K562 (cell line): ENCODE measurements at regions of chr10 and their contacts with region 1.

Region 1: GRCh38 chr10:4849555-4850242 is 23.7 kb downstream of the AKR1E2 start:
- DNase-seq: peak; percentile 80 to 96 (median 82)
- ATAC-seq: peak; percentile 87
- H3K4me3 ChIP-seq: no peak overlapping the region
- H3K27ac ChIP-seq: peak overlapping the region; percentile 96
- H3K4me1 ChIP-seq: peaks cover 14 to 34% of the 10 kb centered on the region in 2 experiments
- H3K27me3 ChIP-seq: no peaks in the 10 kb centered on the region
- CTCF ChIP-seq: peak; percentile 100
- EP300 ChIP-seq: peak; percentile 73; the same call in 1 of the 2 replicates
- POLR2A ChIP-seq: no peak; the same call in none of the 2 replicates
- RAD21 ChIP-seq: peak; percentile 99 to 100

Region 2: DNA sequence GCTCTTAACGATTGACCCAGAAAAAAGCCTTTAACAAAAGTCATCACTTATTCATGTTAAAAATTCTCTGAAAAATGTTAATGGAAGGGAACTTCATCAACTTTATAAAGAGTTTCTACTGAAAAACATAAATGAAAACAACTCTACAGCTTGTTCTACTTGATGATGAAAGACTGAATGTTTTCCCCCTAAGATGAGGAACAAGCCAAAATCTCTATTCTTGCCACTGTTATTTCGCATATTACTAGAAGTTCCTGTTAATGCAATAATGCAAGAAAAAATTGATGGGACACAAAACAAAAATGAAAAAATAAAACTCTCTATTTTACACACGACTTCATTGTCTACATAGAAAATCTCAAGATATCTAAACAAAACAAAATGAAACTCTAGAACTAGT is 273.5 kb before region 1 on chr10:
- CTCF ChIA-PET with region 1: no interaction called
- POLR2A ChIA-PET with region 1: no interaction called
- in situ Hi-C with region 1: no loop called
- intact Hi-C with region 1: no loop called
- DNase-seq: no peak
- ATAC-seq: no peak
- H3K4me3 ChIP-seq: no peak overlapping the region
- H3K27ac ChIP-seq: no peak overlapping the region
- H3K4me1 ChIP-seq: no peaks in the 10 kb centered on the region
- H3K27me3 ChIP-seq: peaks cover 0 to 4% of the 10 kb centered on the region in 2 experiments; a peak in 2 of 5 replicates
- CTCF ChIP-seq: no peak
- EP300 ChIP-seq: no peak
- POLR2A ChIP-seq: no peak
- RAD21 ChIP-seq: no peak

Region 3: GRCh38 chr10:4813023-4813422 is 36.7 kb before region 1 on chr10:
- CTCF ChIA-PET with region 1: interaction called, 10 read pairs
- POLR2A ChIA-PET with region 1: no interaction called
- in situ Hi-C with region 1: no loop called
- intact Hi-C with region 1: loop called (anchors 1 kb)
- DNase-seq: peak in 3 of 4 experiments; percentile 17 to 63 (median 49)
- ATAC-seq: peak; percentile 73
- H3K4me3 ChIP-seq: no peak overlapping the region
- H3K27ac ChIP-seq: no peak overlapping the region; the same call in 2 of the 3 replicates
- H3K4me1 ChIP-seq: peaks cover 0 to 8% of the 10 kb centered on the region in 2 experiments; a peak in 2 of 5 replicates
- H3K27me3 ChIP-seq: no peaks in the 10 kb centered on the region
- CTCF ChIP-seq: no peak
- EP300 ChIP-seq: no peak
- POLR2A ChIP-seq: no peak
- RAD21 ChIP-seq: no peak

Region 4: DNA sequence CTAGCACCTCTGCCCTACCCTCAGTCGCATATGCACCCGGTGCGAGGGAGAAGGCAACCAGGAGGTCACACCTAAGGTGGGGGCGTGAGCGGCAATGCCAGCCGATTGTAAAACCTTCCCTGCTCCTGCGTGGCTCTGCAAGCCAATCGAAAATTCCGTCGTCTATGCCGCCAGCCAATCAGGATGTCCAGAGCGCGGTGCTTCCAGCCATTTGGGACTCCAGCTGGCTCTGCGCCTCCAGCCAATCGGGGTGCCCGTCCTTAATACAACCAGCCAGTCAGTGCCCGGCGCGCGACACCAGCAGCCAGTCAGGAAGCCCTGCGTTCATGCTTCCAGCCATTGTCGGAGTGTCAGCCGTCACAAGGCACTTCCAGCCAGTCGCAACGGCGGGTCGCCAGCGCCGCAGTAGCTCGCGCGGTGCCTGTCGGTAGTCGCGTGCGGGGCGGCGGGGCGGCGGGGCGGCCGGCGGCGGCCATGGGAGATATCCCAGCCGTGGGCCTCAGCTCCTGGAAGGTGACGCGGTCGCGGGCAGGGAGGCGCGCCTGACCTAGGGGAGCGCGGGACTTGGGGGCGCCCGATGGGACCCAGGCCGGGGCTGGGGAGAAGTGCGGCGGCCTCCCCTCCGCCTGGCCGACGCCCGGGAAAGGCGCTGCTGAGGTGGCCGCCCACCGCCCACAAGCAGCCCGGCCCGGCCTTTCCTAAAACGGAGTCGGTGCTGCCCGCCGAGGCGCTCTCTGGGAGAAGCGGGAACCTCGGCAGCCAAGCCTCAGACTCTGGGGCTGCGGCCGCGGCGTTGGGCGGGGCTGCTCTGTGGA is 23.6 kb before region 1 on chr10 and contains the start of gene AKR1E2:
- CTCF ChIA-PET with region 1: interaction called, 3 read pairs
- POLR2A ChIA-PET with region 1: interaction called, 14 read pairs
- in situ Hi-C with region 1: no loop called
- intact Hi-C with region 1: no loop called
- DNase-seq: peak; percentile 87 to 92 (median 90)
- ATAC-seq: peak; percentile 95
- H3K4me3 ChIP-seq: peak within 1 kb of the TSS; percentile 46
- H3K27ac ChIP-seq: peak within 1 kb of the TSS; percentile 88
- H3K4me1 ChIP-seq: peaks cover 24 to 29% of the 10 kb centered on the region in 2 experiments
- H3K27me3 ChIP-seq: no peaks in the 10 kb centered on the region
- CTCF ChIP-seq: no peak
- EP300 ChIP-seq: no peak
- POLR2A ChIP-seq: peak; percentile 79
- RAD21 ChIP-seq: no peak
- polyA plus RNA-seq, gene AKR1E2: 4.2 to 4.7 TPM

Region 5: DNA sequence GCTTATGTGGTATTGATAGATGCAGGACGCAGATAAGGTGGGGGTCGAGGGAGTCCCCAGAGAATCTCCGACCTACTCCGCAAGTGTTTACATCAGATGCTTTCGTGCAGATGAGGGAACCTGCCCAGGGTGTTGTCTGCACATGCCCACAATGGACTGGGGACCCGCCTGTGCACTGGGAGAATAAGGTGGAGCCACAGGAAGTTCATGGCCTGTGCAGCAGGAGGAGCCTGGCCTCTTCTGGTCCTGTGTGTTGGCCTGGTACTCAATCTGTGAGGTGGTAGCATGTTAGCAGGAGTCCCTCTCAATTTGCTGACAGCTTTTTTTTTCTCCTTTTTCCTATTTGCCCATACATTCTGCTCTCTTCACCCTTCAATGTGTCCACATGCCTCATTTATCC is 59.4 kb after region 1 on chr10:
- CTCF ChIA-PET with region 1: no interaction called
- POLR2A ChIA-PET with region 1: no interaction called
- in situ Hi-C with region 1: no loop called
- intact Hi-C with region 1: no loop called
- DNase-seq: no peak
- ATAC-seq: peak; percentile 51; the same call in 2 of the 3 replicates
- H3K4me3 ChIP-seq: no peak overlapping the region
- H3K27ac ChIP-seq: no peak overlapping the region
- H3K4me1 ChIP-seq: no peaks in the 10 kb centered on the region
- H3K27me3 ChIP-seq: no peaks in the 10 kb centered on the region
- CTCF ChIP-seq: no peak
- EP300 ChIP-seq: no peak
- POLR2A ChIP-seq: no peak
- RAD21 ChIP-seq: no peak

Region 6: GRCh38 chr10:4941540-4942330 is 92.0 kb after region 1 on chr10:
- CTCF ChIA-PET with region 1: no interaction called
- POLR2A ChIA-PET with region 1: no interaction called
- in situ Hi-C with region 1: no loop called
- intact Hi-C with region 1: loop called (anchors 1 kb)
- DNase-seq: peak; percentile 72 to 93 (median 78)
- ATAC-seq: peak; percentile 93
- H3K4me3 ChIP-seq: no peak overlapping the region
- H3K27ac ChIP-seq: peak overlapping the region; percentile 74
- H3K4me1 ChIP-seq: peaks cover 0 to 27% of the 10 kb centered on the region in 2 experiments; a peak in 4 of 5 replicates
- H3K27me3 ChIP-seq: no peaks in the 10 kb centered on the region
- CTCF ChIP-seq: no peak
- EP300 ChIP-seq: peak; percentile 91
- POLR2A ChIP-seq: no peak
- RAD21 ChIP-seq: peak in 1 of 2 experiments; percentile 35; a peak in 1 of 4 replicates

Region 7: DNA sequence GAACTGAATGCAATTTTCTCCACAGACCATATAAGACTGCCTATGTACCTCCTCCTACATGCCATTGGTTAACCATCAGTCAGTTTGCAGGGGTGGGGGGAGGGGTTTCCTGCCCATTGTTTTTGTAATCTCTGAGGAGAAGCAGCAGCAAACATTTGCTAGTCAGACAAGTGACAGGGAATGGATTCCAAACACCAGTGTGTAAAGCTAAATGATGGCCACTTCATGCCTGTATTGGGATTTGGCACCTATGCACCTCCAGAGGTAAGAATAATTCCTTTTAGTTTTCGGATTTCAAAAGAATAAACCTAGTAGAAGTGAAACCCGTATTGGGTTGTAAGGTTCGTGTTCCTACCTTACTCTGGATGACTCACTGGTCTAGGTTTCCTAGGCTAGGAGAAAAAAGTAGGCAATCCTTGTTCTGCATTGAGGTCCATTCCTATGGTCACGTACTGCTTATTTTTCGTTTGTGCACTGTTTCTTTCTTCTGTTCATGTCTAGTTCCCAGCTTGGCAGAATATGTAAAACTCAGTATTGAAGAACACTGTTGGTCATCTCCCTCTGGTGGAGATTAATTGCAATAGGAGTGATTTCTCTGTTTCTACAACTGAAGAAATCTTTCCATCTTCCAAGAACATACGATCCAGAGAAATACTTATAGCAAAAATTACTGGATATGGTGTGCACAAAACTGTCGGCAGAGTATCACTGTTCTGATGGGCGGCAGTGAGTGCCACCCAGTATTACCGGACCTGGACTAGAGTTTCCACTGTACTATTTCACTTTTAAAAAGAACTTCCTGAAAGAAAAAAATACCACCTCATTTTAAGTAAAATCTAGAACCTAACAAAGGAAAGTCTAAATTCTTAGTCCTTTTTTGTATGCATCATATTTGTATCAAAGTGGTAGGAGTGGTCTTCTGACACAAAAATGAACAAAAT is 244.8 kb after region 1 on chr10 and contains the start of gene AKR1C3:
- CTCF ChIA-PET with region 1: interaction called, 8 read pairs
- POLR2A ChIA-PET with region 1: no interaction called
- in situ Hi-C with region 1: no loop called
- intact Hi-C with region 1: loop called (anchors 1 kb)
- DNase-seq: peak; percentile 27 to 62 (median 40)
- ATAC-seq: peak; percentile 89
- H3K4me3 ChIP-seq: peak within 1 kb of the TSS; percentile 0; the same call in 1 of the 2 replicates
- H3K27ac ChIP-seq: peak within 1 kb of the TSS; percentile 42; the same call in 2 of the 3 replicates
- H3K4me1 ChIP-seq: no peaks in the 10 kb centered on the region; a peak in 1 of 5 replicates
- H3K27me3 ChIP-seq: no peaks in the 10 kb centered on the region
- CTCF ChIP-seq: peak; percentile 50 to 65 (median 57); a peak in 5 of 6 replicates
- EP300 ChIP-seq: no peak
- POLR2A ChIP-seq: peak; percentile 43; the same call in 1 of the 2 replicates
- RAD21 ChIP-seq: peak; percentile 42 to 79; a peak in 3 of 4 replicates
- polyA plus RNA-seq, gene AKR1C3: 18.8 to 20.4 TPM

Region 8: GRCh38 chr10:5385224-5385623 is 535.5 kb after region 1 on chr10:
- CTCF ChIA-PET with region 1: interaction called, 38 read pairs
- POLR2A ChIA-PET with region 1: no interaction called
- in situ Hi-C with region 1: no loop called
- intact Hi-C with region 1: loop called (anchors 1 kb)
- DNase-seq: no peak
- ATAC-seq: no peak
- H3K4me3 ChIP-seq: no peak overlapping the region
- H3K27ac ChIP-seq: no peak overlapping the region
- H3K4me1 ChIP-seq: no peaks in the 10 kb centered on the region; a peak in 2 of 5 replicates
- H3K27me3 ChIP-seq: no peaks in the 10 kb centered on the region
- CTCF ChIP-seq: no peak
- EP300 ChIP-seq: no peak
- POLR2A ChIP-seq: no peak
- RAD21 ChIP-seq: no peak

Region 9: GRCh38 chr10:5623081-5623748 is 773.5 kb after region 1 on chr10:
- CTCF ChIA-PET with region 1: interaction called, 15 read pairs
- POLR2A ChIA-PET with region 1: no interaction called
- in situ Hi-C with region 1: no loop called
- intact Hi-C with region 1: no loop called
- DNase-seq: peak; percentile 86 to 92 (median 88)
- ATAC-seq: peak; percentile 99
- H3K4me3 ChIP-seq: no peak overlapping the region
- H3K27ac ChIP-seq: no peak overlapping the region
- H3K4me1 ChIP-seq: peaks cover 3 to 21% of the 10 kb centered on the region in 2 experiments; a peak in 3 of 5 replicates
- H3K27me3 ChIP-seq: 0 out of 5 replicates have a peak, but pooled peaks cover 0 to under 1% of the 10 kb centered on the region in 2 experiments
- CTCF ChIP-seq: peak; percentile 90 to 93 (median 91)
- EP300 ChIP-seq: no peak
- POLR2A ChIP-seq: no peak
- RAD21 ChIP-seq: peak; percentile 96 to 98